GM12878 (cell line): ENCODE measurements at regions of chr9 and their contacts with region 1.

Region 1: DNA sequence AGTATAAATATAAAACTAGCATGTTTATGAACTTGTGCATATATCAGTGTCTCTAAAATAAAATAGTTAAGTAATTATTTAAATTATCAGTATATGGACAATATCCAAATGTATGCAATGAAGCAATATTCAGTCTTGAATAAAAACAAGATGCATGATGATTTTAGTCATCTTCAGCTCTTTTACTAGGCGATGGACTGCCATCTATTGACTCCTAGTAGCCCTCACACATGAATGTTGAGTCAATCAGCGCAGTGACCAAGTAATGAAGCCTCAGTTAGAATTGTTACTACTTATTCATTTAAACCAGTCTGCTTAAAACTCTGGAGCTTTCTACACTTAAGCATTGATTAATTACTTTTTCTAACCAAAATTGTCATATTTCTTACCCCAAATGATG is 92.9 kb upstream of the GRHPR start:
- DNase-seq: no peak
- ATAC-seq: peak; percentile 65
- H3K4me3 ChIP-seq: no peak overlapping the region
- H3K27ac ChIP-seq: no peak overlapping the region
- H3K4me1 ChIP-seq: peaks cover 18% of the 10 kb centered on the region
- H3K27me3 ChIP-seq: no peaks in the 10 kb centered on the region
- CTCF ChIP-seq: peak; percentile 47 to 73 (median 47); a peak in 4 of 6 replicates
- EP300 ChIP-seq: no peak
- POLR2A ChIP-seq: no peak
- RAD21 ChIP-seq: peak; percentile 79

Region 2: GRCh38 chr9:36873247-36873875 is 456.2 kb before region 1 on chr9:
- CTCF ChIA-PET with region 1: interaction called, 27 read pairs
- POLR2A ChIA-PET with region 1: no interaction called
- RAD21 ChIA-PET with region 1: interaction called, 18 read pairs
- SMC1A ChIA-PET with region 1: interaction called, 7 read pairs
- in situ Hi-C with region 1: no loop called
- intact Hi-C with region 1: loop called (anchors 5 kb)
- DNase-seq: peak; percentile 28
- ATAC-seq: peak; percentile 95
- H3K4me3 ChIP-seq: no peak overlapping the region
- H3K27ac ChIP-seq: no peak overlapping the region
- H3K4me1 ChIP-seq: peaks cover 27% of the 10 kb centered on the region
- H3K27me3 ChIP-seq: no peaks in the 10 kb centered on the region
- CTCF ChIP-seq: peak; percentile 86 to 91 (median 89); a peak in 5 of 6 replicates
- EP300 ChIP-seq: no peak
- POLR2A ChIP-seq: no peak
- RAD21 ChIP-seq: peak; percentile 86

Region 3: DNA sequence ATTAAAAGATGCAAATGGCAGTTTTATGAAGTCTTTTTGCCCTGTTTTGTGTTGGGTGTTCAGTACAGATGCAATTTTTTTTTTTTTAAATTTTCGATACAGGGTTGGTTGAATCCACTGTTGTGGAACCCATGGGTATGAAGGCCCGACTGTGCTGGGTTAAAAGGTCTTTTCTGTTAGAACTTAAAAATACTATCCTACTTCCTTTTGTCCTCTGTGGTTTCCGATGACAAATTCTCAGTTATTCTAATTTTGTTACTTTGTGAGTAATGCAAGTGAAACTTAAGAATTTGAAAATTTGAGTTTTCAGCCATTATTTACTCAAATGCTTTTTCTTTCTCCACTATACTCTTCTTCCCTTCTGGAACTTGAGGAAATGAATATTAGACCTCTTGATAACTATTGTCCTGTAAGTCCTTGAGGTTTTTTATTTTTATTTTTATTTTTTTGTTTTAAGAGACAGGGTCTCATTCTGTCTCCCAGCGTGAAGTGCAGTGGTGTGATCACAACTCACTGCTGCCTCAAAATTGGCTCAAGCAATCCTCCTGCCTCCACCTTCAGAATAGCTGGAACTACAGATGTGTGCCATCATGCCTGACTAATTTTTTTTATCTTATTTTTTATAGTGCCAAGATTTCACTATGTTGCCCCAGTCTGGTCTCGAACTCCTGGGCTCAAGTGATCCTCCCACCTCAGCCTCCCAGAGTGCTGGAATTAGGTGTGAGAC is 141.7 kb before region 1 on chr9:
- CTCF ChIA-PET with region 1: interaction called, 11 read pairs
- POLR2A ChIA-PET with region 1: interaction called, 4 read pairs
- RAD21 ChIA-PET with region 1: interaction called, 31 read pairs
- SMC1A ChIA-PET with region 1: interaction called, 15 read pairs
- in situ Hi-C with region 1: no loop called
- intact Hi-C with region 1: no loop called
- DNase-seq: peak; percentile 75
- ATAC-seq: peak; percentile 81
- H3K4me3 ChIP-seq: peak overlapping the region; percentile 61
- H3K27ac ChIP-seq: peak overlapping the region; percentile 83
- H3K4me1 ChIP-seq: peaks cover 47% of the 10 kb centered on the region
- H3K27me3 ChIP-seq: no peaks in the 10 kb centered on the region
- CTCF ChIP-seq: no peak
- EP300 ChIP-seq: peak; percentile 31 to 66; a peak in 2 of 4 replicates
- POLR2A ChIP-seq: no peak
- RAD21 ChIP-seq: no peak

Region 4: DNA sequence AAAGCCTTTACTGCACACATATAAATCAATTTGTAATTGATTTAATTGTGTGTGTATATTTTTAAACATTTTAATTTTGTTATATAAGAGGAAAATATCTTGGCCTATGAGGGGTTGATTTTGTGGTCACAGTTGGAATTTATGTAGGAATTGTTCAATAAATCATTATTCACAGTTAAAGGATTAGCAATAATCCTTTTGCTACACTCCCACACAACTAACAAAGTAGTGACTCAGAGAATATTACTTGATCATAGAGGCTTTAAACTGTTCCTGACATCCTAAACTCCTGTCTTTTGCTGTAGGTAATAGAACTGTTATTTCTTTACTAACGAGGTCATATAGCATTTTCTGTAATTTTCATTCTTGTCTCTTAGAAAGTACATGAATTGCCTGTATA is 113.7 kb before region 1 on chr9:
- CTCF ChIA-PET with region 1: interaction called, 3 read pairs
- POLR2A ChIA-PET with region 1: no interaction called
- RAD21 ChIA-PET with region 1: interaction called, 10 read pairs
- SMC1A ChIA-PET with region 1: interaction called, 4 read pairs
- in situ Hi-C with region 1: no loop called
- intact Hi-C with region 1: no loop called
- DNase-seq: no peak
- ATAC-seq: no peak
- H3K4me3 ChIP-seq: no peak overlapping the region
- H3K27ac ChIP-seq: no peak overlapping the region
- H3K4me1 ChIP-seq: peaks cover 3% of the 10 kb centered on the region
- H3K27me3 ChIP-seq: no peaks in the 10 kb centered on the region
- CTCF ChIP-seq: no peak
- EP300 ChIP-seq: no peak
- POLR2A ChIP-seq: no peak
- RAD21 ChIP-seq: no peak

Region 5: GRCh38 chr9:37309136-37309535 is 20.4 kb before region 1 on chr9:
- CTCF ChIA-PET with region 1: interaction called, 32 read pairs
- POLR2A ChIA-PET with region 1: interaction called, 24 read pairs
- RAD21 ChIA-PET with region 1: interaction called, 42 read pairs
- SMC1A ChIA-PET with region 1: interaction called, 65 read pairs
- in situ Hi-C with region 1: no loop called
- intact Hi-C with region 1: no loop called
- DNase-seq: no peak
- ATAC-seq: peak; percentile 91
- H3K4me3 ChIP-seq: no peak overlapping the region
- H3K27ac ChIP-seq: peak overlapping the region; percentile 22
- H3K4me1 ChIP-seq: peaks cover 11% of the 10 kb centered on the region
- H3K27me3 ChIP-seq: no peaks in the 10 kb centered on the region
- CTCF ChIP-seq: peak; percentile 55 to 62 (median 58)
- EP300 ChIP-seq: no peak
- POLR2A ChIP-seq: no peak
- RAD21 ChIP-seq: peak; percentile 83

Region 6: GRCh38 chr9:37382161-37382981 is 52.8 kb after region 1 on chr9:
- CTCF ChIA-PET with region 1: interaction called, 3 read pairs
- POLR2A ChIA-PET with region 1: no interaction called
- RAD21 ChIA-PET with region 1: interaction called, 5 read pairs
- SMC1A ChIA-PET with region 1: interaction called, 11 read pairs
- in situ Hi-C with region 1: no loop called
- intact Hi-C with region 1: no loop called
- DNase-seq: peak; percentile 70
- ATAC-seq: peak; percentile 57
- H3K4me3 ChIP-seq: no peak overlapping the region
- H3K27ac ChIP-seq: peak overlapping the region; percentile 92
- H3K4me1 ChIP-seq: peaks cover 65% of the 10 kb centered on the region
- H3K27me3 ChIP-seq: no peaks in the 10 kb centered on the region
- CTCF ChIP-seq: no peak
- EP300 ChIP-seq: peak; percentile 75 to 80
- POLR2A ChIP-seq: no peak
- RAD21 ChIP-seq: peak; percentile 9; the same call in 1 of the 2 replicates